ENCODE measurements at regions of chr18 and their contacts with region 1.

Region 1: GRCh38 chr18:57803103-57803969 is at the start of gene ATP8B1:
- DNase-seq: peak; percentile 87 to 97
- H3K4me3 ChIP-seq: peak within 1 kb of the TSS; percentile 76 to 89 (median 84)
- H3K27ac ChIP-seq: peak within 1 kb of the TSS; percentile 92 to 95
- H3K4me1 ChIP-seq: no peaks in the 10 kb centered on the region
- H3K27me3 ChIP-seq: no peaks in the 10 kb centered on the region
- CTCF ChIP-seq: no peak
- POLR2A ChIP-seq: peak; percentile 57
- total RNA-seq, gene ATP8B1: 5.1 to 45.1 (median 41.3) TPM

Region 2: DNA sequence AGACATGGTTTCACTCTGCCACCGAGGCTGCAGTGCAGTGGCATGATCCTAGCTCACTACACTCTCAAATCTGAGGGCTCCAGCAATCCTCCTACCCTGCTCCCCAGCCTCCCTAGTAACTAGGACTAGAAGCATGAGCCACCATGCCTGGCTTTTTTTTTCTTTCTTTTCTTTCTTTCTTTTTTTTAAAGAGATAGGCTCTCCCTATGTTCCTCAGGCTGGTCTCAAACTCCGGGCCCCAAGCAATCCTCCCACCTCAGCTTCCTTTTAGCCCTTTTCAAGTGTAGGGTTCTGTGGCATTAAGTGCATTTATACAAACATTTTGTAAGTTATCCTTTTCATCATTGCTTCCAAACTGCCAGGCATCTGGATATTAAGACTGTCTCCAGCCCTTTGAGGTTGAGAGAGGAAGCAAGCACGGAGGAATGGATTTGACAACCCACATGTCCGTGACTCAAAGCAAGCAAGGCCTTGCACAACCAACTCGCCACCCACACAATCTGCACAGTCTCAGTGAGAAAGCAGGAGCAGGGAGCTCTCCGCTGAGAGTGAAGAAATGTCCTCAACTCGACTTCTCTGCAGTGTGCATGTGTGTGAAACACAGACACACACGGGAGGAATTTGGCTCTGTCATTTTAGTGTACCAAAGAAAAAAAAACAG is 65.8 kb before region 1 on chr18:
- intact Hi-C with region 1: loop called (anchors 10 kb)
- DNase-seq: peak; percentile 61 to 78
- H3K4me3 ChIP-seq: no peak overlapping the region
- H3K27ac ChIP-seq: peak overlapping the region; percentile 63 to 74
- H3K4me1 ChIP-seq: no peaks in the 10 kb centered on the region
- H3K27me3 ChIP-seq: no peaks in the 10 kb centered on the region
- CTCF ChIP-seq: no peak
- POLR2A ChIP-seq: no peak

Region 3: DNA sequence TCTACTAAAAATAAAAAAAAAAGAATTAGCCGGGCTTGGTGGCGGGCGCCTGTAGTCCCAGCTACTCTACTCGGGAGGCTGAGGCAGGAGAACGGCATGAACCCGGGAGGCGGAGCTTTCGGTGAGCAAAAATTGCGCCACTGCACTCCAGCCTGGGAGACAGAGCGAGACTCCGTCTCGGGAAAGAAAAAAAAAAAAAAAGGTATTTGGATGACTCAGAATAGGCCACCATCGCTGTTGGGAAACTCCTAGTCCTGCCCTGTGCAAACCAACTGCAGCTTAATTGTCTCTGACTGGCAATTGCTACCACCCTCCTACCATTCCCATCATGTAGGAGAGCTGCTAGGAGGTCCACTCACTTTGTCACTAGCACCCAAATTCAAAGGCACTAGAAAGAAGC is 43.7 kb before region 1 on chr18:
- intact Hi-C with region 1: loop called (anchors 2 kb)
- DNase-seq: no peak
- H3K4me3 ChIP-seq: no peak overlapping the region
- H3K27ac ChIP-seq: no peak overlapping the region
- H3K4me1 ChIP-seq: no peaks in the 10 kb centered on the region
- H3K27me3 ChIP-seq: no peaks in the 10 kb centered on the region
- CTCF ChIP-seq: no peak
- POLR2A ChIP-seq: no peak

Region 4: GRCh38 chr18:58605027-58606020 is 802.0 kb after region 1 on chr18:
- intact Hi-C with region 1: no loop called
- DNase-seq: no peak
- H3K4me3 ChIP-seq: no peak overlapping the region
- H3K27ac ChIP-seq: no peak overlapping the region
- H3K4me1 ChIP-seq: no peaks in the 10 kb centered on the region
- H3K27me3 ChIP-seq: no peaks in the 10 kb centered on the region
- CTCF ChIP-seq: no peak
- POLR2A ChIP-seq: no peak

Measured in breast epithelium (tissue), 4 donors.